ENCODE measurements at regions of chr11 and their contacts with region 1.

Region 1: GRCh38 chr11:10653926-10654810 is 39.4 kb downstream of the IRAG1 start:
- DNase-seq: peak in 7 of 9 experiments; percentile 17 to 75 (median 35)
- ATAC-seq: peak; percentile 71
- H3K4me3 ChIP-seq: no peak overlapping the region
- H3K4me3 Mint-ChIP-seq: no peak overlapping the region
- H3K27ac ChIP-seq: no peak overlapping the region
- H3K27ac Mint-ChIP-seq: no peak overlapping the region
- H3K4me1 ChIP-seq: no peaks in the 10 kb centered on the region
- H3K4me1 Mint-ChIP-seq: no peaks in the 10 kb centered on the region
- H3K27me3 ChIP-seq: no peaks in the 10 kb centered on the region
- H3K27me3 Mint-ChIP-seq: no peaks in the 10 kb centered on the region
- CTCF ChIP-seq: peak; percentile 69

Region 2: GRCh38 chr11:10405855-10406592 is 248.1 kb before region 1 on chr11:
- CTCF ChIA-PET with region 1: interaction called, 151 read pairs
- POLR2A ChIA-PET with region 1: no interaction called
- intact Hi-C with region 1: loop called in 1 of 2 experiments (anchors 1 kb)
- DNase-seq: peak in 7 of 9 experiments; percentile 16 to 75 (median 43)
- ATAC-seq: peak; percentile 73
- H3K4me3 ChIP-seq: no peak overlapping the region
- H3K4me3 Mint-ChIP-seq: no peak overlapping the region
- H3K27ac ChIP-seq: no peak overlapping the region
- H3K27ac Mint-ChIP-seq: no peak overlapping the region
- H3K4me1 ChIP-seq: peaks cover 9% of the 10 kb centered on the region
- H3K4me1 Mint-ChIP-seq: peaks cover 13% of the 10 kb centered on the region
- H3K27me3 ChIP-seq: no peaks in the 10 kb centered on the region
- H3K27me3 Mint-ChIP-seq: no peaks in the 10 kb centered on the region
- CTCF ChIP-seq: peak; percentile 66

Region 3: GRCh38 chr11:10426475-10426874 is 227.7 kb before region 1 on chr11:
- CTCF ChIA-PET with region 1: interaction called, 15 read pairs
- POLR2A ChIA-PET with region 1: no interaction called
- intact Hi-C with region 1: no loop called
- DNase-seq: no peak
- ATAC-seq: no peak
- H3K4me3 ChIP-seq: no peak overlapping the region
- H3K4me3 Mint-ChIP-seq: no peak overlapping the region
- H3K27ac ChIP-seq: no peak overlapping the region
- H3K27ac Mint-ChIP-seq: no peak overlapping the region
- H3K4me1 ChIP-seq: no peaks in the 10 kb centered on the region
- H3K4me1 Mint-ChIP-seq: no peaks in the 10 kb centered on the region
- H3K27me3 ChIP-seq: no peaks in the 10 kb centered on the region
- H3K27me3 Mint-ChIP-seq: no peaks in the 10 kb centered on the region
- CTCF ChIP-seq: no peak

Region 4: DNA sequence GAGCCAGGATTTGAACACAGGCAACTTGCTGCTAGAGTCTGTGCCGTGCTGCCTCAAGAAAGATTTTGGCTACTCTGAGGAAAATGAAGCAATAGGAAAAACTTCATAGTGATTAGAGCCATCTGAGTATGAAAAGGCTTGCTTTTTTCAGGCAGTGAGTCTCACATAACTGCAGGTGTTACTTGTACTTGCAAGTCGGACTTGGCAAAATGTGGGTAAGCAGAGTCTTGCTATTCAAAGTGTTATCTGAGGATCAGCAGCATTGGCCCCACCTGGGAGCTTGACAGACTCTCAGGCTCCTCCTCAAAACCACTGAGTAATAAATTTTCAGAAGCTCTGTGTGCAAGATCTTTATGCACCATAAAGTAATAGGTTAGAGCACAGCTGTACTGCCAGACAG is 131.2 kb before region 1 on chr11:
- CTCF ChIA-PET with region 1: interaction called, 3 read pairs
- POLR2A ChIA-PET with region 1: no interaction called
- intact Hi-C with region 1: loop called in 1 of 2 experiments (anchors 5 kb)
- DNase-seq: no peak
- ATAC-seq: no peak
- H3K4me3 ChIP-seq: no peak overlapping the region
- H3K4me3 Mint-ChIP-seq: no peak overlapping the region
- H3K27ac ChIP-seq: no peak overlapping the region
- H3K27ac Mint-ChIP-seq: no peak overlapping the region
- H3K4me1 ChIP-seq: no peaks in the 10 kb centered on the region
- H3K4me1 Mint-ChIP-seq: peaks cover 7% of the 10 kb centered on the region
- H3K27me3 ChIP-seq: no peaks in the 10 kb centered on the region
- H3K27me3 Mint-ChIP-seq: no peaks in the 10 kb centered on the region
- CTCF ChIP-seq: no peak

Region 5: DNA sequence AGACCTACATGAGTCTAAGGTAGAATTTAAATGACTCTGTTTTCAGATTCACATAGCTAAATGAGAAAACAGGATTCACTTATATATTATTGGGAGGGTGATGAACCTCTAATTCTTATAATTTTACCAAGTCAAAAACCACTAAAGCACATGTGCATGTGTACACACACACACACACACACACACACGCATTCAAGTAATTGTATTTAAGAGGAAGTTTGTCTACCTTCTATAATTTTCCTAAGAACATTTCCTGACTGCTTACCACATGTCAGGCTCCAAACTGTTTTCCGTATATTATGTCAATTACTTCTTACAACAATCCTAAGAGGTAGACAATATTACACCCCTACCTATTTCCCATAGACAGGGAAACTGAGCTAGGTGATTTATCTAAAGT is 119.9 kb before region 1 on chr11:
- CTCF ChIA-PET with region 1: no interaction called
- POLR2A ChIA-PET with region 1: no interaction called
- intact Hi-C with region 1: no loop called
- DNase-seq: no peak
- ATAC-seq: no peak
- H3K4me3 ChIP-seq: no peak overlapping the region
- H3K4me3 Mint-ChIP-seq: no peak overlapping the region
- H3K27ac ChIP-seq: no peak overlapping the region
- H3K27ac Mint-ChIP-seq: no peak overlapping the region
- H3K4me1 ChIP-seq: no peaks in the 10 kb centered on the region
- H3K4me1 Mint-ChIP-seq: peaks cover 18% of the 10 kb centered on the region
- H3K27me3 ChIP-seq: no peaks in the 10 kb centered on the region
- H3K27me3 Mint-ChIP-seq: no peaks in the 10 kb centered on the region
- CTCF ChIP-seq: no peak

Region 6: DNA sequence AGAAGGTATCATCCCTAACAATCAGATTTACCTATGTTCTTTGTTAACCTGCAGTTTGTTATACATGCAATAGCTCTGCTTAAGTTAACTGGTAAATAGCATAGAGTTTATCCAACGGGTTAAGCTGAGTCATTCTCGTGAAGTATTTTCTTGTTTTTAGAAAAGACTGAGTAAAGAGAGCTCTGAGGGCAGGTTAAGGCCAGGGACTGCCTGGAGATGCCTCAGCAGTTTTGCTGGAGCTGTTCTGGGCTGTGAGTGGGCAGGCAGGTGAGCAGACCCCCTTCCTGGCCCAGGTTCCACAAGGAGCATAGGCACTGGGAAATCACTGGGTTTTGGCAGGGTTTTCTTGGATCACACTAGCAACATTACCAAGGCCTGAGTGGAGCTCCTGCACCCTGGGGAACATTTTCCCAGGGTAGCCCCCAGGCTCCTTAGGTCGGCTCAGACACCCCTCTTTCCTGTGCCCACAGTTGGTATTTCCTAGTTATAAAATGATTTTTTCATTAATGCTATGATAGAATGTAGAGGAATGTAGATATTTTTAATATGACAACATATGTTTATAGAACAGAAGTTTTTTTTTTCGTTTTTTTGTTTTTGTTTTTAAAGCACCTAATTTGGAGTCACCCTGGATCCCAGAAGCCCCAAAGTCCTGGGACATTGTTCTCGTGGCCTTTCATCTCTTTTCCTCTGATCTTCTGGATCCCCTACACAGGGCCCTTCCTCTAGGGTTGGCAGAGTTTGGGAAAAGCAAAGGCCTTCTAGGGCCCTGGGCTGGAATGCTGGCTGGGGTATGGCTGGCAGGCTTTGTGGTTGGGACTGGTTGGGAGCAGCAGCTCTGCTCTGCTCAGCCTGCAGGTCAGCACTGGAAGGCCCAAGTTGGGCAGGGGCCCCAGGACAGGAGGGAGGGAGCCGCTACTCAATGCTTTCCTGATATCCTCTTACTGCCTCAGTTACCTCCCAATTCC is 12.7 kb after region 1 on chr11:
- CTCF ChIA-PET with region 1: interaction called, 12 read pairs
- POLR2A ChIA-PET with region 1: no interaction called
- intact Hi-C with region 1: no loop called
- DNase-seq: no peak
- ATAC-seq: no peak
- H3K4me3 ChIP-seq: no peak overlapping the region
- H3K4me3 Mint-ChIP-seq: no peak overlapping the region
- H3K27ac ChIP-seq: no peak overlapping the region
- H3K27ac Mint-ChIP-seq: no peak overlapping the region
- H3K4me1 ChIP-seq: no peaks in the 10 kb centered on the region
- H3K4me1 Mint-ChIP-seq: no peaks in the 10 kb centered on the region
- H3K27me3 ChIP-seq: peaks cover 0 to 2% of the 10 kb centered on the region in 2 experiments
- H3K27me3 Mint-ChIP-seq: peaks cover 5% of the 10 kb centered on the region
- CTCF ChIP-seq: no peak

Region 7: GRCh38 chr11:10735481-10736475 is 81.6 kb after region 1 on chr11:
- CTCF ChIA-PET with region 1: interaction called, 8 read pairs
- POLR2A ChIA-PET with region 1: no interaction called
- intact Hi-C with region 1: loop called (anchors 1 to 2 kb)
- DNase-seq: peak; percentile 73 to 91 (median 85)
- ATAC-seq: peak; percentile 99
- H3K4me3 ChIP-seq: peak overlapping the region; percentile 3 to 20
- H3K4me3 Mint-ChIP-seq: peak overlapping the region; percentile 56
- H3K27ac ChIP-seq: no peak overlapping the region
- H3K27ac Mint-ChIP-seq: no peak overlapping the region
- H3K4me1 ChIP-seq: peaks cover 9% of the 10 kb centered on the region
- H3K4me1 Mint-ChIP-seq: peaks cover 13% of the 10 kb centered on the region
- H3K27me3 ChIP-seq: no peaks in the 10 kb centered on the region
- H3K27me3 Mint-ChIP-seq: no peaks in the 10 kb centered on the region
- CTCF ChIP-seq: peak; percentile 96

Measured in CD8-positive, alpha-beta T cell (primary cell).